B cell (primary cell): ENCODE measurements at regions of chr12 and their contacts with region 1.

Region 1: DNA sequence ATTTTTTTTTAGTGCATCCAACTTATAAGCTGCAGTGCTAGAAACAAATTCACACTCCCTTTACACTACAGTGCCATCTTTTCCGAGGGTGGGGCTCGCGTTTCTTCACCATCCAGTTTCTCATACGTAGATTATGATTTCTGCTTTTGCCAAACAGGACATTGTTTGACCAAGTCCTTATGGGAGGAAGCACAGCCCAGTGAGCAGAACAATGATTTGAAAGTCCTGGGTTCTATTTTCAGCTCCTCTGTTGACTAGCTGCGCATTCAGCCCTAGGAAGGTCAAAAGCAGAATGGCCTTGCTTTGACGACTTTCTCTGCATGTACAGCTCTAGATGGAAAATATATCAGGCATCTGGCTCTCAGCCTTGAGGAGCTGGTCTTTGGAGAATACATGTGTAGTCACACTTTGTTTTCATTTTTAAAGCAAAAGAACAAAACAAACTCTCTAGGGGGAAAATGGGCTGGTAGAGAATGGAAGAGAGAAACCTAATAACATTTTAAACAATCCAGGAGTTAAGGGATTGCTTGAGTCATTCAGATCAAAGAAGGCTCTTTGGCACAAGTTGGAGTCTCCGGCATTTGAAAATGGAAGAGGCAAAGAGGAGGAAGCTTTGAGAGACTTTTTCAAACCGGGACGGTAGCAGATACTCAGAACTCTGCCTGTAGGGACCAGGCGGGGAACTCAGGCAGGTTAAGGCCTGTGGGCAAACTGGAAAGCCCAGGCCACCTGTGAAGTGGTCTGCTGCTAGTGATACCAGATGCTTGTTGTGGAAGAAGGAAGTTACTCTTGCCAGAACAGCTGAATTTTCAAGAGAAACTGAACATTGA is 257.3 kb upstream of the PLEKHG7 start:
- DNase-seq: peak; percentile 89
- ATAC-seq: peak; percentile 71
- H3K4me3 ChIP-seq: peak overlapping the region in 4 of 5 experiments; percentile 0 to 43 (median 25)
- H3K4me3 Mint-ChIP-seq: peak overlapping the region; percentile 80
- H3K27ac ChIP-seq: peak overlapping the region; percentile 99
- H3K27ac Mint-ChIP-seq: peak overlapping the region; percentile 96
- H3K4me1 ChIP-seq: peaks cover 90 to 93% of the 10 kb centered on the region in 2 donors
- H3K4me1 Mint-ChIP-seq: peaks cover 91% of the 10 kb centered on the region
- H3K27me3 ChIP-seq: no peaks in the 10 kb centered on the region
- H3K27me3 Mint-ChIP-seq: no peaks in the 10 kb centered on the region
- CTCF ChIP-seq: no peak

Region 2: DNA sequence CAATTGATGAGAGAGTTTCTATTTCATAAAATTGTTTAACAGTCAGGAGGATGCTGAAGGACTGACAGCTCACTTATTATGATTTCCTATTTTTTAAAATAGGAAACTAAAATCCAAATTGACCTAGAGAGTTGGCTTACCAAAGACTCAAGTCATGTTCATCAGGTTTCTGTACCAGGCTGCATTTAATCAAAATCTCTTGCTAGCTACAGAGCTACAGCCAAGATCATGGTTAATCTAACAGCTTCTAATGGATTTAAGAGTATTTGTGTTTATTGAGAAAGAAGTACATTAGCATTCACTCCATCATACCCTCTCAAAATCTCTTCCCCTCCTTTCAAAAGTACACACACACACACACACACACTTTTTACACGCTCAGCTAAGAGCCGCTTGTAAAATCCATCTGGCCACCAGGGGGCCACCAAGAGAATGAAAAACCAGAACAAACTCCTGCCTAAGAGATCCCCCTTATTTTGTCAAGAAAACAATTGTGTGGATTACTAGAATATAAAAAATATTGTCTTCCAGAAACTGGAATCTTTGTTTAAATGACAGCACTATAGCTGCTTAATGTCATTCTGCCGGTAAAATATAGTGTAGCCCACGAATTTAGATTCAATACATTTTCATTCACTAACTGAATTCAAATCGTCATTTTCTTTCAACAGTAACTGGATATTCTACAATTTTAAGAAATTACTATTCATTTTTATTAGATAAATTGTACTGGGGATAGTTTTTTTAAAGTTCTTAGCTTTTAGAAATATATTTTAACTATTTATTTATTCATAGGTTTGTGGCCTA is 633.8 kb before region 1 on chr12:
- CTCF ChIA-PET with region 1: interaction called, 6 read pairs
- POLR2A ChIA-PET with region 1: no interaction called
- intact Hi-C with region 1: loop called (anchors 10 kb)
- DNase-seq: peak; percentile 80
- ATAC-seq: peak; percentile 71
- H3K4me3 ChIP-seq: no peak overlapping the region
- H3K4me3 Mint-ChIP-seq: no peak overlapping the region
- H3K27ac ChIP-seq: no peak overlapping the region
- H3K27ac Mint-ChIP-seq: peak overlapping the region; percentile 43
- H3K4me1 ChIP-seq: peaks cover 0 to 5% of the 10 kb centered on the region in 2 donors
- H3K4me1 Mint-ChIP-seq: peaks cover 4% of the 10 kb centered on the region
- H3K27me3 ChIP-seq: no peaks in the 10 kb centered on the region
- H3K27me3 Mint-ChIP-seq: no peaks in the 10 kb centered on the region
- CTCF ChIP-seq: peak; percentile 90

Region 3: DNA sequence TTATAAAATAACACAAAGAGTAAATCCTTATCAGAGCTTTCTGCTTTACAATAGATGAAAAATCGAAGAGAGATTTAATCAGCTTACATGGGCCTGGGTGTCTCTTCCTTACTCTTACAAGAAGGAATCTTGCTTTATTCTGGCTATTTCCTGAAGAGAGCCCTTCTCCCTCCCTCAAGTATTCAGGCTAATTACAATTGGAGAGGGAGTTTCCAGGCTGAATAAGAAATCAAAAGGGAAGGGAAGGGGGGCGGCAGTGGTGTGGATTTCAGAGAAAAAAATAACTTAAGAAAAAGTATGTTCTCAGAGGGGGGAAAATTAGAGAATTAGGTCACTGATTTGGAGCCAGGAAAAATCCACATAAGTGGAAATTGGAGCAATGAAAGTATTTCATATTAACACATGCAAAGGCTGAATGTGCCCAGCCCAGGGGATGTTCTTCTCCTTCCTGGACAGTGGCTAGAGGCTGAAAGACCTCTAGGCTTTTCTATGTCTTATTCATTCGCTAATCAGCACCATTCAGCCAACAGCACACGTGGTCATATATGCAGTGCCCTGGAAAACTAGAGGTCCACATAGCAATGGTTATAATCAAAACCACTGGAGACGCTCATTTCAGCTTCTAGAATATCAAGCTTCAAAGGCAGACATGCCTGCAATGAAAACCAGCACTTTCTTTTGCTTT is 141.0 kb before region 1 on chr12:
- CTCF ChIA-PET with region 1: no interaction called
- POLR2A ChIA-PET with region 1: no interaction called
- intact Hi-C with region 1: no loop called
- DNase-seq: no peak
- ATAC-seq: no peak
- H3K4me3 ChIP-seq: no peak overlapping the region
- H3K4me3 Mint-ChIP-seq: no peak overlapping the region
- H3K27ac ChIP-seq: no peak overlapping the region
- H3K27ac Mint-ChIP-seq: no peak overlapping the region
- H3K4me1 ChIP-seq: peaks cover 9% of the 10 kb centered on the region in 2 donors
- H3K4me1 Mint-ChIP-seq: peaks cover 10% of the 10 kb centered on the region
- H3K27me3 ChIP-seq: no peaks in the 10 kb centered on the region
- H3K27me3 Mint-ChIP-seq: no peaks in the 10 kb centered on the region
- CTCF ChIP-seq: no peak

Region 4: GRCh38 chr12:92363295-92364146 is 81.9 kb before region 1 on chr12:
- CTCF ChIA-PET with region 1: interaction called, 28 read pairs
- POLR2A ChIA-PET with region 1: interaction called, 39 read pairs
- intact Hi-C with region 1: loop called (anchors 1 kb)
- DNase-seq: peak; percentile 88
- ATAC-seq: peak; percentile 71
- H3K4me3 ChIP-seq: peak overlapping the region; percentile 12 to 57 (median 54)
- H3K4me3 Mint-ChIP-seq: peak overlapping the region; percentile 92
- H3K27ac ChIP-seq: peak overlapping the region; percentile 95 to 96
- H3K27ac Mint-ChIP-seq: peak overlapping the region; percentile 89
- H3K4me1 ChIP-seq: peaks cover 55 to 57% of the 10 kb centered on the region in 2 donors
- H3K4me1 Mint-ChIP-seq: peaks cover 73% of the 10 kb centered on the region
- H3K27me3 ChIP-seq: no peaks in the 10 kb centered on the region
- H3K27me3 Mint-ChIP-seq: no peaks in the 10 kb centered on the region
- CTCF ChIP-seq: no peak

Region 5: DNA sequence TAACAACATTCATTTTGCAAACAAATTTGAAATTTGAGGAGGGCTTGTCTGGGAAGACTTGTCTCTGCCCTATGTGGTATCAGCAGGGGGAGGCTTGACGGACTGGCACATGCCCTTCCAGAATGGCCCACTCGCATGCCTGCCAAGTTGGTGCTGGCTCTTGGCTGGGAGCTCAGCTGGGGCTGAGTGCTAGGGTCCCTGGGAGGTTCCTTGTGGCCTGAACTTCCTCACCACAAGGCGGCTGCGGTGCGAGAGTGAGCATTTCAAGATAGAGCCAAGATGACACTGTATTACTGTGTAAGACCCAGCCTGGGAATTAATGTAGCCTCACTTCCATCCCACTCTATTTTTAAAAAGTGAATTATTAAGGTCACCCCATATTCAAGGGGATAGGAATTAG is 14.3 kb before region 1 on chr12:
- CTCF ChIA-PET with region 1: interaction called, 6 read pairs
- POLR2A ChIA-PET with region 1: interaction called, 16 read pairs
- intact Hi-C with region 1: no loop called
- DNase-seq: peak; percentile 60
- ATAC-seq: peak; percentile 56
- H3K4me3 ChIP-seq: no peak overlapping the region
- H3K4me3 Mint-ChIP-seq: no peak overlapping the region
- H3K27ac ChIP-seq: no peak overlapping the region
- H3K27ac Mint-ChIP-seq: peak overlapping the region; percentile 71
- H3K4me1 ChIP-seq: peaks cover 52 to 55% of the 10 kb centered on the region in 2 donors
- H3K4me1 Mint-ChIP-seq: peaks cover 73% of the 10 kb centered on the region
- H3K27me3 ChIP-seq: no peaks in the 10 kb centered on the region
- H3K27me3 Mint-ChIP-seq: no peaks in the 10 kb centered on the region
- CTCF ChIP-seq: peak; percentile 32

Region 6: DNA sequence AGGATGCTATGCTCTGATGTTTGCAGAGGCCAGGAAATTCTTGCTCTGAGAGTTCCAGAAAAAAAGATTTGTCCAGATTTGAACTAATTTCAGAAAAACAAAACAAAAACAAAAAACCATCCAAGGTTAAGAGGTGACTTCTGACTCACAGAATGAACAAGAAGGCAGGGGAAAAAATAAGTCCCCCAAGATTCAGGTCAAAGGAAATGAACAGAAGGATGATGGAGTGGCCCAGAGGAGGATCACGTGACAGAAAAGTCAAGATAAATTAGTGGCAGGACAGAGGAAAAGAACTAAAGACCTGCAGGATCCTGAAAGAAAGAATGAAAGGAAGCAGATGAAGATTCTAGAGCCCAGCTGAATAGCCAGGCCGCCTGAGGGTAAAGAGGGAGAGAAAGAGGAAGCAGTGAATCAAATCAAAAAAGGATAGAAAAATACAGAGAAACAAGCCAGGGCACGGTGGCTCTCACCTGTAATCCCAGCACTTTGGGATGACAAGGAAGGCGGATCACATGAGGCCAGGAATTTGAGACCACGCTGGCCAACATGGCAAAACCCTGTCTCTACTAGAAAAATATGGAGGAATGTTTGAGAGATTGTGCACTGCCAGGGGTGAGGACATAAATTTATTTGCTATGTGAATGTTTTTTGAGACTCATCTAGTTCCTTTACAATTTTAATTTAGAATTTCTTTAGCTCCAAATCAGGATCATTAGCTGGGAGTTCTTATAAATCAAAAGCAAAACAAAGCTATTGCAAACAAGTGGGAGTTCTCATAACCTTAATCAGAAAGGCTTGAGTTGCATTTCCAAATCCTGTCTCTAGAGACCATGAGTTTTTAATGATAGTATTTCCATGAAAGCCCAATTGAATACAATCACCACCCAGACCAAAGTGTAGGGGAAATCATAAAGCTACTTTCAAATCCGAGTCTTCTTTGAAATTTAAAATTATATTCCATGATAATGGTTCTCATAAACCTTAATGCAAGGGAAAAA is 40.2 kb after region 1 on chr12:
- CTCF ChIA-PET with region 1: interaction called, 5 read pairs
- POLR2A ChIA-PET with region 1: interaction called, 8 read pairs
- intact Hi-C with region 1: loop called (anchors 1 kb)
- DNase-seq: peak; percentile 52
- ATAC-seq: peak; percentile 15
- H3K4me3 ChIP-seq: peak overlapping the region in 1 of 5 experiments; percentile 20
- H3K4me3 Mint-ChIP-seq: peak overlapping the region; percentile 64
- H3K27ac ChIP-seq: peak overlapping the region; percentile 59 to 81
- H3K27ac Mint-ChIP-seq: peak overlapping the region; percentile 96
- H3K4me1 ChIP-seq: peaks cover 68 to 81% of the 10 kb centered on the region in 2 donors
- H3K4me1 Mint-ChIP-seq: peaks cover 77% of the 10 kb centered on the region
- H3K27me3 ChIP-seq: no peaks in the 10 kb centered on the region
- H3K27me3 Mint-ChIP-seq: no peaks in the 10 kb centered on the region
- CTCF ChIP-seq: no peak

Region 7: DNA sequence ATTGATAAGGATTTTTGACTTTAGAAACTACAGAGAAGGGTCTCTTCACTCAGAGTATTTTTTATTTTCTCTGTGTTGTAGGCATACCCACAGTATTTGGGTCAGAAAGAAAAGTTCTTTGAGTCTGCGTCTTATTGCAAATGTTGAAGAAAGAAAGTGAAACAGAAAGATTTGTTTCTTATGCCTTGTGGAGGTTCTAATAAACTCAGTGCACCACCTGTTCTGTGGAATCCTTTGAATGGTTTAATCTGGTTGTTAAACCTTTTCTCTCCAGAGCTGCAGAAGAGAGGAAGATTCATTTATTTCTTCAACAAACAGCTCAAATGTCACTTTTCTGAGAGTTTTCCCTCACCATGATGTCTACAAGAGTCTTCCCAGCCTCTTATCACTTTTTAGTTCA is 110.7 kb after region 1 on chr12:
- CTCF ChIA-PET with region 1: no interaction called
- POLR2A ChIA-PET with region 1: interaction called, 5 read pairs
- intact Hi-C with region 1: loop called (anchors 5 kb)
- DNase-seq: peak; percentile 61
- ATAC-seq: peak; percentile 59
- H3K4me3 ChIP-seq: peak overlapping the region in 3 of 5 experiments; percentile 28 to 50 (median 33)
- H3K4me3 Mint-ChIP-seq: peak overlapping the region; percentile 71
- H3K27ac ChIP-seq: peak overlapping the region; percentile 72 to 73
- H3K27ac Mint-ChIP-seq: peak overlapping the region; percentile 86
- H3K4me1 ChIP-seq: peaks cover 57 to 65% of the 10 kb centered on the region in 2 donors
- H3K4me1 Mint-ChIP-seq: peaks cover 61% of the 10 kb centered on the region
- H3K27me3 ChIP-seq: no peaks in the 10 kb centered on the region
- H3K27me3 Mint-ChIP-seq: no peaks in the 10 kb centered on the region
- CTCF ChIP-seq: no peak